ENCODE measurements at regions of chr17 and their contacts with region 1.

Region 1: DNA sequence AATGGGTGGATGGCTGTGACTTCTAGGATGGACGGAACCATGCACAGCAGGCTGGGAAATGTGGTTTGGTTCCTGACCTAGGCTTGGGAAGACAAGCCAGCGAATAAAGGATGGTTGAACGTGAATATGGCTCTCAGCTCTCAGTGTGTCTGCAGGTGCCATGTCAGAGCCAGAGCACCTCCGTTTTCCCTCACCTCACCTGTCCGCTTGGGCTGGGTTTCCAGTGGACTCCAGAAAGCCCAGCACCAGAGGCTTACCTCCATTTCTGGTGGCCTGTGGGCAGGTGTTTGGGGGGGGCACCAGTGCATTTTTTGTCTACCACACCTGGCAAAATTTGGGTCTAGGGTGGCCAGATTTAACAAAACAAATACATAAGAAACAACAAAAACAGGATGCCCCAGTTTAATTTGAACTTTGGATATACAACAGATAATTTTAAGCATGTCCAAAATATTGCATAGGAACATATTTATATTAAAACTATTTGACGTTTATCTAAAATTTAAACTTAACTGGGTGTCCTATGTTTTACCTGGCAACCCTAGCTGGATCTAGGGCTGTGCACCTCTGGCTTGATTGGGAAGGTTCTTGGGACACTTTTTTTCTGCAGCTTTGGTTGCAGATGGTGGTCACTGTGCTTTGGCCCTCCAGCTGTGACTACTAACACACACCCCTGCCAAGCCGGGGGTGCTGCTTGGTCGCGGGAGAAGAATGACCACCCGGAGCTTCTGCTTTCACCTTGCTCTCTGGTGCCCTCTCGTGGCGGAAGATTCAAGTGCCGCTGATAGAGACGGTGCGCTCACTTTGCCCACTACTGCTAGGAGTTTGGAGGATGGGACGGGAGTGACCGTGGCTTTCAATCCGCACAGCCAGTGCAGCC is 6.3 kb downstream of the SPACA3 start:
- DNase-seq: peak; percentile 23
- H3K4me3 ChIP-seq: no peak overlapping the region; the same call in 1 of the 2 replicates
- H3K27me3 ChIP-seq: peaks cover 10% of the 10 kb centered on the region
- CTCF ChIP-seq: peak; percentile 95

Region 2: DNA sequence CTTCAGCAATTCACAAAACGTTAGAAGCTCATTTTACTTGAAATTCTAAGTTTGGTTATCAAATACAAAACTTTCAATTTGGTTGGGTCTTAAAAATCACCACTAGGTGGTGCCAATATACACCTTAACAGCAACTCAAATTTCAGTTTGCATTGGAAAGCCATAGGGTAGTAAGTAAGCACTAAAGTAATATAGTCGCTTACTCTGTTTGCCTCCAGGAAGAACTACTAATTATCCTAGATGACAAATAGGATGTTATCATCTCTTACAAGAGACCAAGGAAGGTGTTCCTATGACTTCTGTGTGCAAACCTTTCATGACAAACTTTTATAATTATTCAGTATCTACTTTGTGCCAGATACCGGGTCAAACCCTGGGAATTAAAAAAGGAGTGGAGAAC is 214.4 kb before region 1 on chr17:
- CTCF ChIA-PET with region 1: interaction called, 14 read pairs
- POLR2A ChIA-PET with region 1: no interaction called
- DNase-seq: no peak
- H3K4me3 ChIP-seq: no peak overlapping the region
- H3K27me3 ChIP-seq: no peaks in the 10 kb centered on the region
- CTCF ChIP-seq: peak; percentile 54

Region 3: GRCh38 chr17:32936894-32937500 is 61.0 kb before region 1 on chr17:
- CTCF ChIA-PET with region 1: interaction called, 16 read pairs
- POLR2A ChIA-PET with region 1: no interaction called
- DNase-seq: no peak
- H3K4me3 ChIP-seq: no peak overlapping the region
- H3K27me3 ChIP-seq: no peaks in the 10 kb centered on the region
- CTCF ChIP-seq: peak; percentile 82

Region 4: DNA sequence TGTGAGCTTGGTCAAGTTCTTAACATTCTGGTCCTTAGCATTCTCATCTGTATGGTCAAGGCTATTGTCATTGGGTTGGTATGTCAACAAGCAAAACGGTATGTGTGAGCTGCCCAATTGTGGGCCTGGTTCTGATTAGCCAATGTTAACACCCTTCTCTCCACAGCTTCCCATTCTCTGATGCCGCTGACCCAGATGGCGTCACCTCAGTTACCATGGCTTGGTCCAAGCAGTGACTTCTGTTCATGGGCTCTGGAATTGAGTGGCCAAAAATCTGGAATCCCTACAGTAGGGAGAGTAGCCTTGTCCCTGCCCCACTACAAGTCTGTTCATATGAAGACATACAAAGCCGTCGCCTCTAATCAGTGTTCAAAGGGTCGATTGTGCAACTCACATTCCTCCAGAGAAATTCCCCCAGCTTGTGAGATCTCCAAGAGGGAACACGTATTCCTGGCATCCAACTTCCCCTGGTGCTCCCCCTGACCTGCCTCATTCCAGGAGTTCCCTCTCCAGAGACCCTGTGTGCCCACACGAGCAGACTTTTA is 54.3 kb before region 1 on chr17:
- CTCF ChIA-PET with region 1: interaction called, 16 read pairs
- POLR2A ChIA-PET with region 1: no interaction called
- DNase-seq: peak; percentile 86
- H3K4me3 ChIP-seq: no peak overlapping the region
- H3K27me3 ChIP-seq: no peaks in the 10 kb centered on the region
- CTCF ChIP-seq: no peak

Region 5: GRCh38 chr17:32960506-32961214 is 37.3 kb before region 1 on chr17:
- CTCF ChIA-PET with region 1: interaction called, 16 read pairs
- POLR2A ChIA-PET with region 1: no interaction called
- DNase-seq: no peak
- H3K4me3 ChIP-seq: no peak overlapping the region
- H3K27me3 ChIP-seq: peaks cover 1% of the 10 kb centered on the region; the same call in 1 of the 2 replicates
- CTCF ChIP-seq: no peak

Region 6: DNA sequence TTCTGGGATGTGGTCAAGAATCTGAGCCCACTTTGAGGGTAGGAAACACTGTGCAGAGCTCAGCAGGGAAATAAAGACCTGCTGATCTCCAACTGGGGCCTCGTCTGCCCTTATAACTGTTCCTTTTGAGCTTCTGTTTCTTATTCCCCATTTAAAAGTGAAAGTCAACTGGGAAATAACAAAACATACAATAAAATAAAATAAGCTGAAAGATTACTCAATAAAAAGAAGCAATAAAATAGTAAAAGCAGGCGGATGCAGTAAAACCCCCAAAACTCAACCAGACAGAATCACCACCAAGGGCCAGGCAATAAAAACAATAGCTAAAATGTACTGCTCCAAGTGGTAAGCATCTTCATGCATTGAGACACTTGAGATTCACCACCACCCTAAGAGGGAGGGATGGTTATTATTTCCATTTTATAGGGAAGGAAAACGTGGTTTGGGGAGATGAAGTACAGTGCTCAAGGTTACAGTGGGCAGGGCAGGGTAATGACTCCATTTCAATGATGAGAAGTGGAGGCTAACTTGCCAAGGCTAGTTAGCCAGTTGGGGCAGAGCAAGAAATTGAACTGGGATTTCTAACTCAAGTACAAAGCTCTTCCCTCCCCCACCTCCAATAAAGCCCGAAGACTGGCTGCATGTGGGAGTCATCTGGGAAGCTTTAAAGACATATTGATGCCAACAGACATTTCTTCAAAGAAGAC is 12.8 kb before region 1 on chr17:
- CTCF ChIA-PET with region 1: interaction called, 22 read pairs
- POLR2A ChIA-PET with region 1: no interaction called
- DNase-seq: no peak
- H3K4me3 ChIP-seq: no peak overlapping the region
- H3K27me3 ChIP-seq: 0 out of 2 replicates have a peak, but pooled peaks cover 3% of the 10 kb centered on the region
- CTCF ChIP-seq: no peak

Region 7: GRCh38 chr17:33012522-33013033 is 14.6 kb after region 1 on chr17:
- CTCF ChIA-PET with region 1: interaction called, 32 read pairs
- POLR2A ChIA-PET with region 1: no interaction called
- DNase-seq: peak; percentile 51
- H3K4me3 ChIP-seq: no peak overlapping the region
- H3K27me3 ChIP-seq: no peaks in the 10 kb centered on the region
- CTCF ChIP-seq: no peak